ENCODE measurements at regions of chr7 and their contacts with region 1.

Region 1: GRCh38 chr7:99386584-99387238 is 12.2 kb downstream of the ARPC1B start:
- DNase-seq: peak; percentile 48
- ATAC-seq: peak; percentile 70
- H3K4me3 ChIP-seq: no peak overlapping the region
- H3K4me3 Mint-ChIP-seq: no peak overlapping the region
- H3K27ac ChIP-seq: no peak overlapping the region
- H3K27ac Mint-ChIP-seq: peak overlapping the region; percentile 53
- H3K4me1 ChIP-seq: peaks cover 12 to 35% of the 10 kb centered on the region in 2 donors
- H3K4me1 Mint-ChIP-seq: peaks cover 22% of the 10 kb centered on the region
- H3K27me3 ChIP-seq: no peaks in the 10 kb centered on the region
- H3K27me3 Mint-ChIP-seq: no peaks in the 10 kb centered on the region
- CTCF ChIP-seq: peak; percentile 27

Region 2: GRCh38 chr7:99364961-99365817 is 21.5 kb before region 1 on chr7:
- CTCF ChIA-PET with region 1: interaction called, 24 read pairs
- POLR2A ChIA-PET with region 1: interaction called, 7 read pairs
- intact Hi-C with region 1: loop called (anchors 1 kb)
- DNase-seq: peak; percentile 73
- ATAC-seq: peak; percentile 96
- H3K4me3 ChIP-seq: no peak overlapping the region
- H3K4me3 Mint-ChIP-seq: no peak overlapping the region
- H3K27ac ChIP-seq: no peak overlapping the region
- H3K27ac Mint-ChIP-seq: no peak overlapping the region
- H3K4me1 ChIP-seq: no peaks in the 10 kb centered on the region
- H3K4me1 Mint-ChIP-seq: peaks cover 1% of the 10 kb centered on the region
- H3K27me3 ChIP-seq: no peaks in the 10 kb centered on the region
- H3K27me3 Mint-ChIP-seq: no peaks in the 10 kb centered on the region
- CTCF ChIP-seq: peak; percentile 76

Region 3: GRCh38 chr7:99422186-99422585 is 35.5 kb after region 1 on chr7:
- CTCF ChIA-PET with region 1: no interaction called
- POLR2A ChIA-PET with region 1: no interaction called
- intact Hi-C with region 1: no loop called
- DNase-seq: no peak
- ATAC-seq: no peak
- H3K4me3 ChIP-seq: no peak overlapping the region
- H3K4me3 Mint-ChIP-seq: no peak overlapping the region
- H3K27ac ChIP-seq: no peak overlapping the region
- H3K27ac Mint-ChIP-seq: no peak overlapping the region
- H3K4me1 ChIP-seq: no peaks in the 10 kb centered on the region
- H3K4me1 Mint-ChIP-seq: no peaks in the 10 kb centered on the region
- H3K27me3 ChIP-seq: no peaks in the 10 kb centered on the region
- H3K27me3 Mint-ChIP-seq: no peaks in the 10 kb centered on the region
- CTCF ChIP-seq: no peak